Activated B cell treated with CpG ODN at 0.5 μM for 24 hours (primary cell): ENCODE measurements at regions of chrX and their contacts with region 1.

Region 1: GRCh38 chrX:130110379-130111219 is at the start of gene ELF4:
- DNase-seq: peak; percentile 44
- ATAC-seq: peak; percentile 59
- H3K4me3 Mint-ChIP-seq: peak within 1 kb of the TSS; percentile 92
- H3K27ac Mint-ChIP-seq: peak within 1 kb of the TSS; percentile 88
- H3K4me1 Mint-ChIP-seq: peaks cover 40% of the 10 kb centered on the region
- H3K27me3 Mint-ChIP-seq: no peaks in the 10 kb centered on the region
- CTCF ChIP-seq: no peak
- total RNA-seq, gene ELF4: 32.4 and 33.0 TPM in 2 replicates

Region 2: DNA sequence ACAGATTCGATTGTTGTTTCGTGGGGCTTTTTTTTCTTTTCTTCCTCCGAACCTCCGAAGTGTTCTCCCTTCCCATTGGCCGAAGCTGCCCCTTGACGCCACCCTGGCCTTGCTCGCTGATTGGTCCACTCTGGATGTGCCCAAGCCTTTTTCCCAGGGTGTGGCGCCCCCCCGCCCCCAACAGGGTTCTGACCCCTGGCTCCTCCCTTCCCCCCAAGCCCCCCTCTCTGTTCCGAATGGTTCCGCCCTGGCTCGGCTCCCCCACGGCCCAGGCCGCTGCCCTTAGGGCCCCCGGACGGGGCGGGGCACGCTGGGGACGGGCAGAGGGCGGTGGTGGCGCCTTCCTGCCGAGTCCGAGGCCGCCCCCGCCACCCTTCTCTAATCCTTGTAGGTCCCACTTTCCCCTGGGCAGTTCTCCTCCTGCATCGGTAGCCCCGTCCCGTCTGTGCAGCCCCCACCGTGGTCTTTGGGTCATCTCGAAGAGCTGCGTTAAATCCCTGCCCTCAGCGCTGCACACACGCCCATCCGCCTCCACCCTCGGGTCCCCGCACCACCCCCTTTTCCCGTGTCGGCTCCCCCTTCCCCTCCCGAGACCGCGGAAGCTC is 179.1 kb before region 1 on chrX:
- CTCF ChIA-PET with region 1: no interaction called
- POLR2A ChIA-PET with region 1: interaction called, 11 read pairs
- intact Hi-C with region 1: no loop called
- DNase-seq: peak; percentile 59
- ATAC-seq: peak; percentile 70
- H3K4me3 Mint-ChIP-seq: peak overlapping the region; percentile 86
- H3K27ac Mint-ChIP-seq: peak overlapping the region; percentile 90
- H3K4me1 Mint-ChIP-seq: peaks cover 5% of the 10 kb centered on the region
- H3K27me3 Mint-ChIP-seq: no peaks in the 10 kb centered on the region
- CTCF ChIP-seq: no peak

Region 3: GRCh38 chrX:130086447-130087206 is 24.0 kb before region 1 on chrX:
- CTCF ChIA-PET with region 1: interaction called, 28 read pairs
- POLR2A ChIA-PET with region 1: interaction called, 37 read pairs
- intact Hi-C with region 1: loop called (anchors 1 kb)
- DNase-seq: no peak
- ATAC-seq: peak; percentile 38
- H3K4me3 Mint-ChIP-seq: peak overlapping the region; percentile 62
- H3K27ac Mint-ChIP-seq: peak overlapping the region; percentile 89
- H3K4me1 Mint-ChIP-seq: peaks cover 78% of the 10 kb centered on the region
- H3K27me3 Mint-ChIP-seq: no peaks in the 10 kb centered on the region
- CTCF ChIP-seq: no peak

Region 4: GRCh38 chrX:130120746-130121504 is 10.3 kb after region 1 on chrX:
- CTCF ChIA-PET with region 1: interaction called, 4 read pairs
- POLR2A ChIA-PET with region 1: interaction called, 7 read pairs
- intact Hi-C with region 1: loop called (anchors 1 kb)
- DNase-seq: peak; percentile 64
- ATAC-seq: peak; percentile 83
- H3K4me3 Mint-ChIP-seq: peak overlapping the region; percentile 76
- H3K27ac Mint-ChIP-seq: peak overlapping the region; percentile 53
- H3K4me1 Mint-ChIP-seq: peaks cover 18% of the 10 kb centered on the region
- H3K27me3 Mint-ChIP-seq: no peaks in the 10 kb centered on the region
- CTCF ChIP-seq: no peak

Region 5: GRCh38 chrX:130190801-130191200 is 80.2 kb after region 1 on chrX:
- CTCF ChIA-PET with region 1: no interaction called
- POLR2A ChIA-PET with region 1: no interaction called
- intact Hi-C with region 1: no loop called
- DNase-seq: no peak
- ATAC-seq: no peak
- H3K4me3 Mint-ChIP-seq: no peak overlapping the region
- H3K27ac Mint-ChIP-seq: no peak overlapping the region
- H3K4me1 Mint-ChIP-seq: peaks cover 7% of the 10 kb centered on the region
- H3K27me3 Mint-ChIP-seq: no peaks in the 10 kb centered on the region
- CTCF ChIP-seq: no peak

Region 6: GRCh38 chrX:130902783-130903613 is 792.4 kb after region 1 on chrX and contains the start of gene ENOX2:
- CTCF ChIA-PET with region 1: no interaction called
- POLR2A ChIA-PET with region 1: no interaction called
- intact Hi-C with region 1: loop called (anchors 5 kb)
- DNase-seq: peak; percentile 60
- ATAC-seq: peak; percentile 94
- H3K4me3 Mint-ChIP-seq: no peak within 1 kb of the TSS
- H3K27ac Mint-ChIP-seq: peak within 1 kb of the TSS; percentile 59
- H3K4me1 Mint-ChIP-seq: peaks cover 12% of the 10 kb centered on the region
- H3K27me3 Mint-ChIP-seq: no peaks in the 10 kb centered on the region
- CTCF ChIP-seq: no peak
- total RNA-seq, gene ENOX2: 15.9 and 16.2 TPM in 2 replicates